ENCODE measurements at regions of chr3 and their contacts with region 1.

Region 1: DNA sequence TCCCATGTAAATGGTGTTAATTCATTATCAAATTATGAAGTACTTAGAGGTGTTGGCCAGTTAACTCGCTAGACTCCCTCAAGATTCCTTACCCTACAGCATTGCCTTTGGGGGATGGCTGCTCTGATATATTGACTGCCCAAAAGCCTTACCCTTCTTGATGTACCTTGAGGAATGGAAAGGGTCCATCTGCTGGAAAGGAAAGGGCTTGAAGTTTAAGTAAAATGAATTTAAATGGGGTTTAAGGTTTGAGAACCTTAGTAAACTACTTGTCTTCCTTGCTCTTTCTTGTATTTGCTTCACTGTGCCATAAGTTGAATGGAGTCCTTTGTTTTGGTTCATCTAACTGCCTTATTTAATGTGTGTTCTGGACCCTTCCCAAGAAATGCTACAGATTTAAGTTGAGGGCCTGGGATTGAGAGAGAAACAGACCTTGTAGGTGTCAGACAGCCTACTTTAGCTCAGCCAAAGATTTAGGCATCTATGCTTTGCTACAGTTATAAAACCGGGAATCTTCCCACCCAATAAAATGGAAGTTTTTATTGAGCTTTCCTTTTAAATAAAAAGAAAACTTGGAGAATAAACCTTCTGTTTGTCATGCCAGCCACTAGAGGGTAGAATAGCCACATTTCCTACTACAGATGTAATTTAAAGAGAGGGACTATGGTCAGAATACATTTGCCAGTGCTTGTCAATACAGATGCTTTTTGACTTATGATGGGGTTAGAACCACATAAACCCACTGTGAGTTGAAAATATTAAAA is 25.3 kb downstream of the CMSS1 start:
- DNase-seq: no peak
- ATAC-seq: peak; percentile 63
- H3K4me3 Mint-ChIP-seq: no peak overlapping the region
- H3K27ac Mint-ChIP-seq: no peak overlapping the region
- H3K4me1 Mint-ChIP-seq: peaks cover 18% of the 10 kb centered on the region
- H3K27me3 Mint-ChIP-seq: no peaks in the 10 kb centered on the region

Region 2: DNA sequence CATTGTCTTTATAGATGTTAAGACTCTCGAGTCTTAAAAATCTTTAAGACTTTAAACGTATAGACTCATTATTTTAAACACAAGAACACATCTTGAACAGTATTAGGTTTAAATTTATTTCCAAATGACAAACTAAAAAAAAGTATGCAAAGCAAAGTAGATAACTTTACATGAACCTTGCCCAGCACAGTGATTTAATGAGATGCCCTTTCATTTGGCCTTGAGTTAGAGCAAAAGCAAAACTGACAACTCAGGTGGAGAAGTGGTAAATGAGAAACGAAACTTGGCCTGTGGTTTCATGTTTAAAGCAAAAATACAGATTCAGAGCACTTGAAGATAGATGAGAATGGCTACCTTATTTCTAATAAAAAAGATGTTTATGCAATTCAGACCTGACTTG is 1302.7 kb before region 1 on chr3:
- CTCF ChIA-PET with region 1: no interaction called
- POLR2A ChIA-PET with region 1: no interaction called
- DNase-seq: peak; percentile 54
- ATAC-seq: peak; percentile 61
- H3K4me3 Mint-ChIP-seq: peak overlapping the region; percentile 24
- H3K27ac Mint-ChIP-seq: peak overlapping the region; percentile 79
- H3K4me1 Mint-ChIP-seq: peaks cover 67% of the 10 kb centered on the region
- H3K27me3 Mint-ChIP-seq: no peaks in the 10 kb centered on the region

Region 3: DNA sequence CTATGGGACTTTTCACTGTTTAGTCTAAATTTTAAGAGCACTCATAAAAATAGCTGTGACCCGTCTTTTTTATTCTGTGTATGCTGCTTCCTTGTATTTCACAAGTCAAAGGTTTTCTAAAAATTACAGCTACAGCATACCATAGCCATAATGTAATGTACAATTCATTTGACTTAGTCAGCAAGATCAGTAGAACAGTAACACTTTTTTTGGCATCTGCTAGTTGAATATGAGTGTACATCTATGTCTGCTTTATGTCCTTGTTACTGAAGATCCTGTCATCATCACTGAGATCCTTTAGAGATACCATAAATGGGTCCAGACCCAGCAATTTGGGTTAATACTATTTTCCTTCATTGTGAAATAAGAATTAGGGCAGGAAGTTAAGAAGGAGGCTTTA is 16.8 kb after region 1 on chr3:
- CTCF ChIA-PET with region 1: interaction called, 14 read pairs
- POLR2A ChIA-PET with region 1: no interaction called
- DNase-seq: no peak
- ATAC-seq: no peak
- H3K4me3 Mint-ChIP-seq: no peak overlapping the region
- H3K27ac Mint-ChIP-seq: no peak overlapping the region
- H3K4me1 Mint-ChIP-seq: peaks cover 17% of the 10 kb centered on the region
- H3K27me3 Mint-ChIP-seq: no peaks in the 10 kb centered on the region

Region 4: GRCh38 chr3:99895703-99896441 is 52.9 kb after region 1 on chr3:
- CTCF ChIA-PET with region 1: interaction called, 10 read pairs
- POLR2A ChIA-PET with region 1: no interaction called
- DNase-seq: no peak
- ATAC-seq: no peak
- H3K4me3 Mint-ChIP-seq: no peak overlapping the region
- H3K27ac Mint-ChIP-seq: no peak overlapping the region
- H3K4me1 Mint-ChIP-seq: peaks cover 9% of the 10 kb centered on the region
- H3K27me3 Mint-ChIP-seq: no peaks in the 10 kb centered on the region

Region 5: GRCh38 chr3:100057716-100058575 is 214.9 kb after region 1 on chr3:
- CTCF ChIA-PET with region 1: interaction called, 13 read pairs
- POLR2A ChIA-PET with region 1: no interaction called
- DNase-seq: no peak
- ATAC-seq: no peak
- H3K4me3 Mint-ChIP-seq: no peak overlapping the region
- H3K27ac Mint-ChIP-seq: no peak overlapping the region
- H3K4me1 Mint-ChIP-seq: peaks cover 22% of the 10 kb centered on the region
- H3K27me3 Mint-ChIP-seq: no peaks in the 10 kb centered on the region

Region 6: DNA sequence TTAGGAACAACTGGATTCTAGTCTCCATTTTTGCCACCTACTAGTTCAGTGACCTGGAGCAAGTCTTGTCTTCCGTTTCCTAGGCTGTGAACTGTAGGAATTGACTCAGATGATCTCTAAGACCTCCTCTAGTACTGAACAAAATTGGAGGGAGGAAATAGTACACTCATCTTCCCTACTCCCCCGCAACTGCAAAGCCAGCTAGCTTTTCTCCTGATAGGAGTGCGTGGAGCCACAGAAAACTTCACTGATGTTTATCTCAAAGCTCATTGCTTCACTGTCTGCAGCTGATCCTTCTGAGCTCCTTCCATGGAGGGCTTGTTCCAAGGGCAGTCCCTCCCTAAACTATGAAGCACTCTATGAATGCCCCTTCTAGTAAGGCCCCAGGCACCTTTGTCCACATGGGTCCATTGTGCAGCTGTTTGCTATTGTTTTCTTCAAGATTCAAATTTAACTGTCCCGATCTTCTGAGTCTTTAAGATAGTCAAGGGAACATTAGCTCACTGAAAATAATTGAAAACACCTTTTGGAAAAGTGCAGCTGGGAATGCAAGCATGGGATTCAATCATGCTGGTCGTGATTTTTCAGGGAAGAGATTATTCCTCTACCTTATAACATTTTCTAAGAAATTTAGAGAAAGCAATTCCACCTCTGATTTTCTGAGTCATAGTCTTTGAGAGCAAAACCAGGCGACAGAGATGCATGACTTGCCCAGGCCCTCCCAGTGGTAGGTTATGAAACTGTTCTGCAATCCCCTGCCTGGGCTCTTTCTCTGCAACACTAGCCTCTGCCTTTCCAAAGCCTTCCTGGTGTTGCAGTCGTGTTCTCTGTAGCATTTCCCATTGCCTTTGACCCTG is 247.0 kb after region 1 on chr3:
- CTCF ChIA-PET with region 1: interaction called, 14 read pairs
- POLR2A ChIA-PET with region 1: no interaction called
- DNase-seq: peak; percentile 56
- ATAC-seq: peak; percentile 84
- H3K4me3 Mint-ChIP-seq: no peak overlapping the region
- H3K27ac Mint-ChIP-seq: peak overlapping the region; percentile 43
- H3K4me1 Mint-ChIP-seq: peaks cover 61% of the 10 kb centered on the region
- H3K27me3 Mint-ChIP-seq: peaks cover 3% of the 10 kb centered on the region

Region 7: GRCh38 chr3:100260685-100261484 is 417.9 kb after region 1 on chr3 and contains the start of gene TBC1D23:
- CTCF ChIA-PET with region 1: interaction called, 72 read pairs
- POLR2A ChIA-PET with region 1: no interaction called
- DNase-seq: peak; percentile 99
- ATAC-seq: peak; percentile 100
- H3K4me3 Mint-ChIP-seq: peak within 1 kb of the TSS; percentile 88
- H3K27ac Mint-ChIP-seq: peak within 1 kb of the TSS; percentile 94
- H3K4me1 Mint-ChIP-seq: peaks cover 51% of the 10 kb centered on the region
- H3K27me3 Mint-ChIP-seq: no peaks in the 10 kb centered on the region
- total RNA-seq, gene TBC1D23: 28.6 to 29.3 TPM